Caco-2 (cell line): ENCODE measurements at regions of chr3 and their contacts with region 1.

Region 1: GRCh38 chr3:113626503-113627371 is 69.7 kb downstream of the USF3 start:
- DNase-seq: peak; percentile 62 to 71
- H3K4me3 ChIP-seq: no peak overlapping the region
- H3K4me3 Mint-ChIP-seq: no peak overlapping the region
- H3K27ac Mint-ChIP-seq: no peak overlapping the region
- H3K4me1 ChIP-seq: peaks cover 5% of the 10 kb centered on the region; the same call in 1 of the 2 replicates
- H3K4me1 Mint-ChIP-seq: peaks cover 9% of the 10 kb centered on the region
- H3K27me3 ChIP-seq: no peaks in the 10 kb centered on the region
- H3K27me3 Mint-ChIP-seq: peaks cover 8% of the 10 kb centered on the region
- CTCF ChIP-seq: peak; percentile 78 to 95

Region 2: GRCh38 chr3:113136071-113136470 is 490.7 kb before region 1 on chr3:
- CTCF ChIA-PET with region 1: no interaction called
- POLR2A ChIA-PET with region 1: no interaction called
- intact Hi-C with region 1: loop called (anchors 10 kb)
- DNase-seq: no peak
- H3K4me3 ChIP-seq: no peak overlapping the region
- H3K4me3 Mint-ChIP-seq: no peak overlapping the region
- H3K27ac Mint-ChIP-seq: no peak overlapping the region
- H3K4me1 ChIP-seq: no peaks in the 10 kb centered on the region
- H3K4me1 Mint-ChIP-seq: no peaks in the 10 kb centered on the region
- H3K27me3 ChIP-seq: no peaks in the 10 kb centered on the region
- H3K27me3 Mint-ChIP-seq: peaks cover 4% of the 10 kb centered on the region
- CTCF ChIP-seq: peak; percentile 32 to 45

Region 3: DNA sequence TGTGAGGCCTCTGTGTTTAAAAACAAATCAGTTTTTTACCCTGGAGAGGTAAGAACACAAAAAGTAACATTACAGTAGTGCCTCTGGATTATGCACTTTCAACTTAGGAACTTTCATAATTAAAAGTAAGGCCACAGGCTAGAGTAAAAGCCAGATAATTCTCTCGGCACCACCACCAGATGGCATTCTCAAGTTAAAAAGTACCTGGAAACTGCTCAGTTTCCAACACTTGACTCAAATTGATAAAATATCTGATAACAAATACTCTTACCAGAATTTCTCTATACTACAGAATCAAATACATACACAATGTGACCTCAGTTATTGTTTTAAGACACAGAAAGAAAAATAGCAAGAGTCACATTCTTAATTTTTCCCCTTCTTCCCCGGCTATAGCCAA is 131.7 kb before region 1 on chr3:
- CTCF ChIA-PET with region 1: interaction called, 4 read pairs
- POLR2A ChIA-PET with region 1: no interaction called
- intact Hi-C with region 1: loop called (anchors 1 kb)
- DNase-seq: peak; percentile 41 to 42
- H3K4me3 ChIP-seq: no peak overlapping the region
- H3K4me3 Mint-ChIP-seq: no peak overlapping the region
- H3K27ac Mint-ChIP-seq: no peak overlapping the region
- H3K4me1 ChIP-seq: no peaks in the 10 kb centered on the region
- H3K4me1 Mint-ChIP-seq: no peaks in the 10 kb centered on the region
- H3K27me3 ChIP-seq: no peaks in the 10 kb centered on the region
- H3K27me3 Mint-ChIP-seq: no peaks in the 10 kb centered on the region
- CTCF ChIP-seq: peak; percentile 27 to 53

Region 4: DNA sequence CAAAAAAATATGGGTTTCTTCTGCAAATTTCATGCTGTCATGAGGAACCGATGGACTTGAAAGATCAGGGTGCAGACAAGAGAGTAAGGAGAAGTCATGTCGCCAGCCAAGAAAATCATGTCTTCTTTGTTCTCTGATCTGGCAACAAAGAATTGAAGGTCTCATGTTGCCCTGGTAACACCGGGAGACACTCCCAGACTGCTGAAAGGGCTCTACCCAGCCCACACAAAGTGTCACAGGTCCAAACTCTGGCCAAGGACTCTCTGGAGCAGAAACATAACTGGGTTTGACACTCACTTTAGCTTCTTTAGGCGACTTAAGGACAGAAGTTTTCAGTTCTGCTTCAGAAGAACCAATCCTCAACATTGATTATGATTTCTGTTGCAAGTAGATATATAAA is 51.5 kb before region 1 on chr3:
- CTCF ChIA-PET with region 1: no interaction called
- POLR2A ChIA-PET with region 1: no interaction called
- intact Hi-C with region 1: loop called (anchors 2 kb)
- DNase-seq: no peak
- H3K4me3 ChIP-seq: no peak overlapping the region
- H3K4me3 Mint-ChIP-seq: no peak overlapping the region
- H3K27ac Mint-ChIP-seq: peak overlapping the region; percentile 58
- H3K4me1 ChIP-seq: peaks cover 26% of the 10 kb centered on the region
- H3K4me1 Mint-ChIP-seq: peaks cover 32% of the 10 kb centered on the region
- H3K27me3 ChIP-seq: no peaks in the 10 kb centered on the region
- H3K27me3 Mint-ChIP-seq: no peaks in the 10 kb centered on the region
- CTCF ChIP-seq: no peak